ENCODE measurements at regions of chr2 and their contacts with region 1.

Region 1: DNA sequence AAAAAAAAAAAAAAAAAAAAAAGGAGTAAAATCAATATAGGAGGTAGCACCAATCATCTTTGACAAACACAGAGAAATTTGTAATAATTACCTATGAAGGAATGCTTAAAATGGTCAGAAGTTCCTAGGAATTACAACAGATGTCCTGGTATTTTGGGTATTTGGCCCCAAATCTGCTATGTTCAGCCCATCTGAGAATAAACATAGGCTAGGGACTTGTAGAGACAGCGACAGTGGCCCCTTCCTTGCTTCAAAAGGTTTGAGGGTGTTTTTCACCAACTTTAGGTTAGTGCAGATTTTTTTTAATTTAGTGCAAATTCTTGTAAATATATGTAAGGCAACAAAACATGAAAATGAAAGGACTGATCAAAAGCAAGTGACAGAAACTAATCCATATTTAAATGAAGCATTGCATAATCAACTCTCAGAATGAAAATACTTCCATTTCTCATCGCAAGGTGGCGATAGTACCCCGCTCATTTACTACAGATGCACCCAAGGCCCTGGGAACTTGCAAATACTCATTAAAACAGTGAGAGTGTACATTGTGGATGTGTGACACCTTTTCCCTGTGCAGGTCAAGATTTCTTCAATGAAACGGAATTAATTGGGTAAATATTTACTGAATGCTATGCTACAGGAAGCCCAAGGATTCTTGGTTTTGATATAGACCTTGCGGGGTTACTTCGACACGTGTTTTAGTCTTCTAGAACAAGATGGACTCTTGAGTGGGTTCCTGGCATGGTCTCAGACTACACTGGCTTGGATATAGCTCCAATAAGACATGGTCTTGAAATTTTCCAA is 44.6 kb downstream of the FAM124B start:
- DNase-seq: peak in 2 of 5 donors; percentile 27 to 39
- ATAC-seq: peak in 3 of 4 donors; percentile 66 to 80 (median 68)
- H3K4me3 ChIP-seq: no peak overlapping the region
- H3K27ac ChIP-seq: no peak overlapping the region
- H3K4me1 ChIP-seq: no peaks in the 10 kb centered on the region
- H3K27me3 ChIP-seq: no peaks in the 10 kb centered on the region
- CTCF ChIP-seq: peak; percentile 65 to 87 (median 80)
- POLR2A ChIP-seq: no peak

Region 2: GRCh38 chr2:224442071-224442967 is 85.0 kb after region 1 on chr2:
- intact Hi-C with region 1: loop called in 7 of 10 experiments (anchors 5 kb)
- DNase-seq: peak in 3 of 5 donors; percentile 28 to 62 (median 32)
- ATAC-seq: peak in 2 of 4 donors; percentile 38 to 59
- H3K4me3 ChIP-seq: peak overlapping the region; percentile 38 to 69 (median 55)
- H3K27ac ChIP-seq: peak overlapping the region in 1 of 12 donors; percentile 24
- H3K4me1 ChIP-seq: peaks cover 0 to 12% (median 0%) of the 10 kb centered on the region in 12 donors
- H3K27me3 ChIP-seq: peaks cover 0 to 19% (median 2%) of the 10 kb centered on the region in 9 donors
- CTCF ChIP-seq: no peak
- POLR2A ChIP-seq: no peak

Region 3: DNA sequence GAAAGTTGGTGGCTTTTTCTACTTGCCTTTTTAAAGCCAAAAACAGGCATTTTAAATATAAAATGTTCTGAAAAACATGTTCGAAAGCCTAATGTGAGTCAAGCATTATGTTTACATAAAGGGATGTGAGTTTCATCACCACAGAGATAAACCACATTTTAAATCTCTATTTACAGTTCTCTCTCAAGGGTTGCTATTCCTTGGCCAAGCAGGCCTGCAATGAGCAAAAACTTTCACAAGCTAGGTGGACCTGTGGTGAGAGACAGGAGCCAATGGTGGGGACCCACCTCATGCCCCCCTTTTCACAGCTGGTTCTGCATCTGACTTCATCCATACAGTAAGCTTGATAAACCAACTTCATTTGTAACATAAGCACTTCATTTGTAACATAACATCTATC is 162.8 kb after region 1 on chr2:
- intact Hi-C with region 1: no loop called
- DNase-seq: no peak
- ATAC-seq: no peak
- H3K4me3 ChIP-seq: no peak overlapping the region
- H3K27ac ChIP-seq: no peak overlapping the region
- H3K4me1 ChIP-seq: peaks cover 0 to 78% (median 31%) of the 10 kb centered on the region in 12 donors
- H3K27me3 ChIP-seq: no peaks in the 10 kb centered on the region
- CTCF ChIP-seq: no peak
- POLR2A ChIP-seq: no peak

Region 4: GRCh38 chr2:224650815-224651439 is 293.6 kb after region 1 on chr2:
- intact Hi-C with region 1: loop called (anchors 1 to 2 kb)
- DNase-seq: no peak
- ATAC-seq: peak in 2 of 4 donors; percentile 52 to 73
- H3K4me3 ChIP-seq: no peak overlapping the region
- H3K27ac ChIP-seq: no peak overlapping the region
- H3K4me1 ChIP-seq: peaks cover 0 to 3% (median 0%) of the 10 kb centered on the region in 12 donors
- H3K27me3 ChIP-seq: peaks cover 0 to 8% (median 0%) of the 10 kb centered on the region in 9 donors
- CTCF ChIP-seq: peak; percentile 67 to 83 (median 77)
- POLR2A ChIP-seq: no peak

Region 5: GRCh38 chr2:225650041-225650440 is 1292.7 kb after region 1 on chr2:
- intact Hi-C with region 1: loop called in 1 of 10 experiments (anchors 10 kb)
- DNase-seq: no peak
- ATAC-seq: no peak
- H3K4me3 ChIP-seq: no peak overlapping the region
- H3K27ac ChIP-seq: no peak overlapping the region
- H3K4me1 ChIP-seq: no peaks in the 10 kb centered on the region
- H3K27me3 ChIP-seq: peaks cover 0 to 12% (median 0%) of the 10 kb centered on the region in 9 donors
- CTCF ChIP-seq: no peak
- POLR2A ChIP-seq: no peak